Activated CD4-positive, alpha-beta memory T cell treated with anti-CD3 and anti-CD28 coated beads, Interleukin-2, amount 10 ng/mL, durations not matched to agents 7 days and 5 days (primary cell): ENCODE measurements at regions of chr6 and their contacts with region 1.

Region 1: DNA sequence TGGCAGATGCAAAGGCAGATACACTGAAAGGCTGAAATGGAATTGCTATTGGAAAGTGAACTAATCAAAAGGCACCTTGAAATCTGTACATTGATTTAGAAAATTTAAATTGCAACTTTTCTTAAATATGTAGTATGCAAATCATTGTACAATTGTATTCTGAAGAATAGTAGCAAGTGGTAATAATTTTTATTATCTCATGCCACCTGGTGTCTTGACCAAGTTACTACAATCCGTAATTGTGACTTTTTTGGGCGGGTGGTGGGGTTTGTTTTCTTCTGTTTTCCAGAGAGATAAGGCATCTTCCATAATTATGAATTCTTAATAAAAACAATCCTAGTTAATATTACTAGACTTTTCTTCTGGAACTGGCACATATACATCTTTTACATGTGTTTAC is 12.5 kb upstream of the BCKDHB start:
- DNase-seq: no peak
- H3K4me3 Mint-ChIP-seq: no peak overlapping the region
- H3K27ac Mint-ChIP-seq: no peak overlapping the region
- H3K4me1 Mint-ChIP-seq: peaks cover 9% of the 10 kb centered on the region
- H3K27me3 Mint-ChIP-seq: peaks cover 4% of the 10 kb centered on the region

Region 2: GRCh38 chr6:79949233-79949632 is 144.8 kb before region 1 on chr6:
- CTCF ChIA-PET with region 1: interaction called, 33 read pairs
- POLR2A ChIA-PET with region 1: no interaction called
- DNase-seq: peak; percentile 68
- H3K4me3 Mint-ChIP-seq: no peak overlapping the region
- H3K27ac Mint-ChIP-seq: no peak overlapping the region
- H3K4me1 Mint-ChIP-seq: peaks cover 25% of the 10 kb centered on the region
- H3K27me3 Mint-ChIP-seq: peaks cover 37% of the 10 kb centered on the region

Region 3: DNA sequence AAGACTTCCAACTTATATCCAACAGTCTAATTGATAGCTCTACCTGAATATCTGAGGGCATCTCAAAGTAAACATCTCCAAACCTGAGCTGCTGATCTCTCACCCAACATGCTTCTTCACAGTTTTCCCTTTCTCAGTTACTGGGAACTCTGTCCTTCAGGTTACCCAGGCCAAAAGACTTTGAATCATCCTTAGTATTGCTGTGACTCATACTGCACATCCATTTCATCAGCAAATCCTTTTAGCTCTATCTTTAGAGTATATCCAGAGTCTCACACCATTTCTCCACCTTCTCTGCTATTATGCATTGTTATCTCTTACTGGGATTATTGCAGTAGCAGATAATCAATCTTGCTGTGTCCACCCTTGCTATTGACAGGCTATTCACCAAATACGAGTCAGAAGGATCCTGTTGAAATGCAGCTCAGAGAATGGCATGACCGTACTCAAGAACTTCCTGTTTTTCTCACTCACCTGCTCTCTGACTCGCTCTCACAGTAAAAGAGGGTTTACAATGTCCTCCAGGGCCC is 69.7 kb after region 1 on chr6:
- CTCF ChIA-PET with region 1: no interaction called
- POLR2A ChIA-PET with region 1: no interaction called
- DNase-seq: no peak
- H3K4me3 Mint-ChIP-seq: no peak overlapping the region
- H3K27ac Mint-ChIP-seq: no peak overlapping the region
- H3K4me1 Mint-ChIP-seq: peaks cover 15% of the 10 kb centered on the region
- H3K27me3 Mint-ChIP-seq: no peaks in the 10 kb centered on the region

Region 4: GRCh38 chr6:80468398-80468797 is 374.4 kb after region 1 on chr6:
- CTCF ChIA-PET with region 1: no interaction called
- POLR2A ChIA-PET with region 1: no interaction called
- DNase-seq: no peak
- H3K4me3 Mint-ChIP-seq: no peak overlapping the region
- H3K27ac Mint-ChIP-seq: no peak overlapping the region
- H3K4me1 Mint-ChIP-seq: no peaks in the 10 kb centered on the region
- H3K27me3 Mint-ChIP-seq: no peaks in the 10 kb centered on the region